ENCODE measurements at regions of chr1 and their contacts with region 1.

Region 1: GRCh38 chr1:156090822-156091188 is 8.5 kb upstream of the MEX3A start:
- DNase-seq: peak; percentile 79 to 92 (median 82)
- ATAC-seq: peak; percentile 99
- H3K4me3 ChIP-seq: no peak overlapping the region
- H3K27ac ChIP-seq: no peak overlapping the region
- H3K4me1 ChIP-seq: peaks cover 0 to 8% of the 10 kb centered on the region in 2 experiments; a peak in 2 of 5 replicates
- H3K27me3 ChIP-seq: no peaks in the 10 kb centered on the region
- CTCF ChIP-seq: peak; percentile 88 to 97 (median 93)
- EP300 ChIP-seq: no peak
- POLR2A ChIP-seq: no peak
- RAD21 ChIP-seq: peak; percentile 82 to 94

Region 2: GRCh38 chr1:156025877-156026276 is 64.9 kb before region 1 on chr1:
- CTCF ChIA-PET with region 1: no interaction called
- POLR2A ChIA-PET with region 1: no interaction called
- in situ Hi-C with region 1: no loop called
- intact Hi-C with region 1: no loop called
- DNase-seq: peak; percentile 47 to 73 (median 64)
- ATAC-seq: peak; percentile 99
- H3K4me3 ChIP-seq: no peak overlapping the region
- H3K27ac ChIP-seq: no peak overlapping the region
- H3K4me1 ChIP-seq: peaks cover 4 to 6% of the 10 kb centered on the region in 2 experiments; a peak in 3 of 5 replicates
- H3K27me3 ChIP-seq: no peaks in the 10 kb centered on the region
- CTCF ChIP-seq: peak; percentile 89 to 98 (median 90)
- EP300 ChIP-seq: no peak
- POLR2A ChIP-seq: no peak
- RAD21 ChIP-seq: peak; percentile 36 to 64

Region 3: GRCh38 chr1:156129706-156130581 is 39.1 kb after region 1 on chr1:
- CTCF ChIA-PET with region 1: interaction called, 71 read pairs
- POLR2A ChIA-PET with region 1: interaction called, 76 read pairs
- in situ Hi-C with region 1: loop called (anchors 5 kb)
- intact Hi-C with region 1: loop called (anchors 1 kb)
- DNase-seq: peak; percentile 72 to 87 (median 80)
- ATAC-seq: peak; percentile 75
- H3K4me3 ChIP-seq: no peak overlapping the region
- H3K27ac ChIP-seq: peak overlapping the region; percentile 76
- H3K4me1 ChIP-seq: peaks cover 51 to 53% of the 10 kb centered on the region in 2 experiments
- H3K27me3 ChIP-seq: no peaks in the 10 kb centered on the region
- CTCF ChIP-seq: peak; percentile 92 to 96 (median 94)
- EP300 ChIP-seq: no peak
- POLR2A ChIP-seq: no peak
- RAD21 ChIP-seq: peak; percentile 95 to 98

Region 4: GRCh38 chr1:156226116-156226538 is 135.3 kb after region 1 on chr1:
- CTCF ChIA-PET with region 1: interaction called, 17 read pairs
- POLR2A ChIA-PET with region 1: interaction called, 3 read pairs
- in situ Hi-C with region 1: loop called (anchors 5 kb)
- intact Hi-C with region 1: loop called (anchors 5 kb)
- DNase-seq: no peak
- ATAC-seq: no peak
- H3K4me3 ChIP-seq: no peak overlapping the region
- H3K27ac ChIP-seq: no peak overlapping the region
- H3K4me1 ChIP-seq: peaks cover 3 to 7% of the 10 kb centered on the region in 2 experiments; a peak in 3 of 5 replicates
- H3K27me3 ChIP-seq: no peaks in the 10 kb centered on the region
- CTCF ChIP-seq: no peak
- EP300 ChIP-seq: no peak
- POLR2A ChIP-seq: no peak
- RAD21 ChIP-seq: no peak

Measured in K562 (cell line).